ENCODE measurements at regions of chr5 and their contacts with region 1.

Region 1: DNA sequence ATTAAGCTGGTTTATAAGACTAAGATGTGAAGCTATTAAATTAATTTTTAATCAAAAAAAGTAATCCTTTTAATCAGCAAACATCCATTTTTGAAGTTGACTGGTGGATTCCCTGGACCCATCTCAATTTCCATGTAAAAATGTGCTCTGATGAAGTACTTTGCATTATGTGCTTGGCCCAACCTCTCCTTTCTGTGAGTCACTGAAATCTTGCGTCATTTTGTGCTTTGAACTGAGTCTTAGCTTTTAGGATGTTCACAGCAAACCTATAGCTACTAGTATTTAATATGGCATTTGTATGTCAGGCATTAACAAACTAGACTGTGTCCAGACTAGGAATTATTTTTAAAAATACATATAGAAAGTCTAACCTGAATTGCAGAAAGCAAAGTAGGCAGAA is 55.0 kb upstream of the CDH12 start:
- DNase-seq: no peak
- ATAC-seq: no peak
- H3K4me3 ChIP-seq: no peak overlapping the region
- H3K27ac ChIP-seq: no peak overlapping the region
- H3K4me1 ChIP-seq: no peaks in the 10 kb centered on the region
- H3K27me3 ChIP-seq: no peaks in the 10 kb centered on the region
- CTCF ChIP-seq: no peak
- POLR2A ChIP-seq: no peak

Region 2: DNA sequence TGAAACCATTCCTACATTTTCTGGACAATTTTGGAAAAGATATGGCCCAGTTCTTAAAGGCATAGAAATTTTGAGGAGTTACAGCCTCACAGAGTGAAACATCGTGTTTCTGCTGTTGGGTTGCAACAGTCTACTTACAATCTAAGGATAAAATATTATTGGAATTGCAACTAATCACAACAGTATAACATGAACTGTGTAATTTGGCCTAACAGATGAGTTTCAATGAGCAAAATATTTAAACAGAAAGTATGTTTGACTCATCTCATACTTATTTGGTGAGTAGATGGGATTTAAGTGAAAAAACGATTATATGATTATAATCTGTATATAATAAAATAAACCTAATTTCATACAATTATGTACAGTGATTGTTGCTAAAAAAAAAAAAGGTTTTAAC is 1116.8 kb before region 1 on chr5:
- intact Hi-C with region 1: no loop called
- DNase-seq: no peak
- ATAC-seq: no peak
- H3K4me3 ChIP-seq: no peak overlapping the region
- H3K27ac ChIP-seq: no peak overlapping the region
- H3K4me1 ChIP-seq: no peaks in the 10 kb centered on the region
- H3K27me3 ChIP-seq: peaks cover 0 to 3% (median 0%) of the 10 kb centered on the region in 9 donors
- CTCF ChIP-seq: no peak
- POLR2A ChIP-seq: no peak

Region 3: GRCh38 chr5:22699319-22699718 is 208.8 kb before region 1 on chr5:
- intact Hi-C with region 1: loop called in 1 of 10 experiments (anchors 5 kb)
- DNase-seq: no peak
- ATAC-seq: no peak
- H3K4me3 ChIP-seq: no peak overlapping the region
- H3K27ac ChIP-seq: no peak overlapping the region
- H3K4me1 ChIP-seq: no peaks in the 10 kb centered on the region
- H3K27me3 ChIP-seq: no peaks in the 10 kb centered on the region
- CTCF ChIP-seq: no peak
- POLR2A ChIP-seq: no peak

Region 4: GRCh38 chr5:22709743-22710142 is 198.4 kb before region 1 on chr5:
- intact Hi-C with region 1: no loop called
- DNase-seq: no peak
- ATAC-seq: no peak
- H3K4me3 ChIP-seq: no peak overlapping the region
- H3K27ac ChIP-seq: no peak overlapping the region
- H3K4me1 ChIP-seq: no peaks in the 10 kb centered on the region
- H3K27me3 ChIP-seq: no peaks in the 10 kb centered on the region
- CTCF ChIP-seq: no peak
- POLR2A ChIP-seq: no peak

Region 5: DNA sequence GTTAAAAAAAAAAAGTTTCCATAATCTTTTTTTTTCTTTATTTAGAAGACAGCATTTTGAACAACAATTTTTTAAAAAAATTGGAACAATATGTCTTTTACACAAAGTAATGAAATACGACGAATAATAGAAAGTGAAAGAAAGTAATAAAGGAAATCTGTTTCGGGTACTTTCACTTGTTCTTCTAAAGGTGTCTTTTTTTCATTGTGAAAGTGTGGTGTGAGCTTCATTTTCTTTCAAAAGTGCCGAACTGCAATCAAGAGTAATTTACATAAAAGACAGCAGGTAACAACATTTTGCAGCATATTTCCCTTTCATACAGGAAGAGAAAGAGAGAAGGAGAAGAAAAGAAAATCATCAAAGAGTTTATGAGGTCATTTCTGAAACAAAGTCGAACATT is 104.7 kb after region 1 on chr5:
- intact Hi-C with region 1: no loop called
- DNase-seq: no peak
- ATAC-seq: no peak
- H3K4me3 ChIP-seq: peak overlapping the region in 6 of 12 donors; percentile 5 to 47 (median 28)
- H3K27ac ChIP-seq: no peak overlapping the region
- H3K4me1 ChIP-seq: no peaks in the 10 kb centered on the region
- H3K27me3 ChIP-seq: no peaks in the 10 kb centered on the region
- CTCF ChIP-seq: no peak
- POLR2A ChIP-seq: no peak

Region 6: DNA sequence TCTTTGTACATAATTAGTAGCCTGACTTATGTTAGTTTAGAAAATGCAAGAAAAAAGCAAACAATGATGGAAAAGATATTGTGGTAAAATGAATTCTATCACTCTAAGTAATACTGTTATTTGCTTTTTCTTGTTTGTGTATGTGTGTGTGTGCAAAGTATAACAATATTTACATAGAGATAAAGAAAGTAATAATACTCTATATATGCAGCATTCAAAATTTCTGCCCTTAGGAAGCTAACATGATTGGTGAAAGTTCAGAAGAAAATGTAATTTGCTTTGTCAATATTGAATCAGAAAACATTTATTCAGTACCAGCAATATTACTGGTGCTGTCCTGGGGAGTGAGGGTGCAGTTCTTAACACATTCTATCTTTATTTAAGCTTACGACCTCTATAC is 586.4 kb after region 1 on chr5:
- intact Hi-C with region 1: no loop called
- DNase-seq: no peak
- ATAC-seq: no peak
- H3K4me3 ChIP-seq: no peak overlapping the region
- H3K27ac ChIP-seq: no peak overlapping the region
- H3K4me1 ChIP-seq: no peaks in the 10 kb centered on the region
- H3K27me3 ChIP-seq: no peaks in the 10 kb centered on the region
- CTCF ChIP-seq: no peak
- POLR2A ChIP-seq: no peak

Measured in heart left ventricle (tissue), 16 donors.